ENCODE measurements at regions of chr1 and their contacts with region 1.

Region 1: DNA sequence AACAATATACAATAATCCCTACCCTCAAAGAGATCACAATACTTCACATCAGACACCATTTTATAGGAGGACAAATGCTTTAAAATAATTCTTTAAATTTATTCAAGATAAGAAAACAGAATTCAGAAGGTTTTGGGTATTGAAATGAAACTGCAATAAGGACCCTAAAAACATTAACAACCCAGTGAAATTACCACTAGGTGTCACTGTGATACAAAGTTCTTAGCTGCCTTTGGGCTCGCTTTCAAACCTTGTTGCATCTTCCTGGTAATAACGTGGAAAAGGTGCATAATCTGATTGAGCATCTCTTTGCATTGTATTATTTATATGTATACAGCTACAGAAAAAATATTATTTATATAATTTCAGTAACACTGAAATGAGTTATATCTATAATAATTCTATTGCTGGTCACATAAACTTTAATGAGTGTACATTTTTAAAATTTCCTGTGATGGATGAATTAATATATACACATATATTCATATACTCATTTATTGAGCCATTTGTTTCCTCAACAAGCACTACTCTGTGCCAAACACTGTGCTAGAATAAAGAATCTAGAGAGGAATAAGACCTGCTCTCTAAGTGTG is 185.2 kb downstream of the FAF1 start:
- DNase-seq: peak; percentile 6
- ATAC-seq: no peak
- H3K4me3 Mint-ChIP-seq: no peak overlapping the region
- H3K27ac Mint-ChIP-seq: no peak overlapping the region
- H3K4me1 Mint-ChIP-seq: peaks cover 3% of the 10 kb centered on the region
- H3K27me3 Mint-ChIP-seq: no peaks in the 10 kb centered on the region

Region 2: DNA sequence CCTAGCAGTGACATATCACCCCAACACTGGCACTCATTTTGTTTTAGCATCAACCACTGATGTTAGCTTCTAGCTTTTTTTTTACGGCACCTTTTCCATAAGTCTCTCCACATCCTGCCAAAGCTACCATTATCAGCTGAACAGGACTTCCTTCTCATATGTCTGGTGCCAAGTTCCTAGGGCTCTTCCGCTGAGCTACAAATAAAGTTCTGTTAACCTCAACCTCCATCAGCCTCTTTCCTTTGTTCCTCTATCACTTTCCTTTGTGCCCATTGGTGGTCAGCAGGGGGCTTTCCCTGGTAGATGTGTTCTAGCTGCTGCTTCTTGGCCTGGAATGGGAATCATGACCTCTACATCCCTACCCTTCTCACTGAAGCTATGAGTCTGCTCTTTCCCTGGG is 21.4 kb after region 1 on chr1:
- CTCF ChIA-PET with region 1: interaction called, 14 read pairs
- POLR2A ChIA-PET with region 1: no interaction called
- intact Hi-C with region 1: no loop called
- DNase-seq: no peak
- ATAC-seq: no peak
- H3K4me3 Mint-ChIP-seq: no peak overlapping the region
- H3K27ac Mint-ChIP-seq: no peak overlapping the region
- H3K4me1 Mint-ChIP-seq: no peaks in the 10 kb centered on the region
- H3K27me3 Mint-ChIP-seq: no peaks in the 10 kb centered on the region

Region 3: DNA sequence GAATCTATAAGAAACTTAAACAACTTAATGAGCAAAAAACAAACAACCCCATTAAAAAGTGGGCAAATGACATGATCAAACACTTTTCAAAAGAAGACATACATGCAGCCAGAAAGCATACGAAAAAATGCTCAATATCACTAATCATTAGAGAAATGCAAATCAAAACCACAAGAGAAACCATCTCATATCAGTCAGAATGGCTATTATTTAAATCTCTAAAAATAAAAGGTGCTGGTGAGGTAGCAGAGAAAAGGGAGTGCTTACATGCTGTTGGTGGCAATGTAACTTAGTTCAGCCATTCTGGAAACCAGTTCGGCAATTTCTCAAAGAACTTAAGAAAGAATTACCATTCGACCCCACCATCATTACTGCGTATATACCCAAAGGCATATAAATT is 37.5 kb after region 1 on chr1:
- CTCF ChIA-PET with region 1: no interaction called
- POLR2A ChIA-PET with region 1: no interaction called
- intact Hi-C with region 1: no loop called
- DNase-seq: no peak
- ATAC-seq: no peak
- H3K4me3 Mint-ChIP-seq: no peak overlapping the region
- H3K27ac Mint-ChIP-seq: no peak overlapping the region
- H3K4me1 Mint-ChIP-seq: peaks cover 17% of the 10 kb centered on the region
- H3K27me3 Mint-ChIP-seq: no peaks in the 10 kb centered on the region

Region 4: DNA sequence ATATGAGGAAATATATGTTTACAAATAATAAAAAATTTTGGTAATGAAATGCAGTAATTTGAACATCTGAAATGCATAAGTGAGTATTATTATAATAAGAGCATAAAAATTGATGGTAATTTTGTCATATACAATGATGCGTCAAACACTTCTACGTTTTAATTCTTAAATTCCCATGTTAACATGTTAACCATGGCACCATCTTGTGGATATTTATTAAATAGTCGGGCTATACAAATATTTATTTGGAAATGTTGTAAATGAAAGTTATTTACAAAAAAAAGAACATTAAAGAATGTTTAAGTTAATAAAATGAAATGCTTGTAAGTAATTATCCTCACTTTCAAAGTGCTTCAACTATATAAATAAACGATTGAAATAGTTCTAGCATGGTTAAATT is 270.0 kb after region 1 on chr1:
- CTCF ChIA-PET with region 1: no interaction called
- POLR2A ChIA-PET with region 1: no interaction called
- intact Hi-C with region 1: loop called in 1 of 2 experiments (anchors 5 kb)
- DNase-seq: no peak
- ATAC-seq: no peak
- H3K4me3 Mint-ChIP-seq: no peak overlapping the region
- H3K27ac Mint-ChIP-seq: no peak overlapping the region
- H3K4me1 Mint-ChIP-seq: no peaks in the 10 kb centered on the region
- H3K27me3 Mint-ChIP-seq: peaks cover 7% of the 10 kb centered on the region

Region 5: GRCh38 chr1:51058858-51059257 is 284.0 kb after region 1 on chr1:
- CTCF ChIA-PET with region 1: interaction called, 4 read pairs
- POLR2A ChIA-PET with region 1: no interaction called
- intact Hi-C with region 1: loop called (anchors 5 kb)
- DNase-seq: peak; percentile 7
- ATAC-seq: no peak
- H3K4me3 Mint-ChIP-seq: no peak overlapping the region
- H3K27ac Mint-ChIP-seq: no peak overlapping the region
- H3K4me1 Mint-ChIP-seq: no peaks in the 10 kb centered on the region
- H3K27me3 Mint-ChIP-seq: peaks cover 9% of the 10 kb centered on the region

Region 6: DNA sequence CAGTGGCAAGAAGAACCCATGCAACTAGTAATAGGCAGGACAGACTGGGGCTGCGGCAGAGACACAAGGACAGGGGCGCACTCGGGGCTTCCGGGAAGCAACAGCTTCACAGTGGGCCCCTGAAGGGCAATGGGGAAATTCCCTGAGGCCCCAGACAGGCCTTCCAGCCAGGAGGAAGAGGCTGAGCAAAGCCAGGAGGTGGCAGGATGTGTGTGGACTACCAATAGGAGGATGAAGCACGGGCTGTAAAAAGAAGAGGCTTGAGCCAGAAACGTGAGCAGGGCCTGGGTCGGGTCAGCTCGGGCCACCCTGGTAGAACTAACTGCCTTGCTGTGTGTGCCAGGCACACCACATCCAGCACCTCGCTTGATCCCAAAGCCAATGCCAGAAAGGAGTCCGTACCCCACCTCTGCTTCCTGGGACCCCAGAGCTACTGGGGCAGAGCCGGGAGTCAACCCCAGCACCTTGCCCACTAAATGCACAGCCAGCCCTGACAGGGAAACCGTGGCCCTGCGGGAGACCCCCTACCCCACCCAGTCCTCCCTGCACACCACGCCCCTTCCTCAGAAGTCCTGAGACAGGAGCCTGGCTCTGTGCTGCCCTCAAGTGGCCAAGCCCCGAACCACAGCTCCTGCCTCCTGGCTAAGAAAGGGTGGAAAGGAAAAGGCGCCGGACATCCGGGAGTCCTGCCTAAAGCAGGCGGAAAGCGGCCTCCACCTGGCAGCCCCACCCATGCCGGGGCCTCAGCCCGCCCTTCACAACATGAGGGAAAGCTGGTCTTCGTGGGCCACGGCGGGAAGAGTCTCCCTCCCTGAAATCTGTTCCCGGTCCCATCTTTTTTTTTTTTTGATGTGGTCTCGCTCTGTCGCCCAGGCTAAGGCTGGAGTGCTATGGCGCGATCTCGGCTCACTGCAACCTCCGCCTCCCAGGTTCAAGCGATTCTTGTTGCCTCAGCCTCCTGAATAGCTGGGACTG is 521.8 kb after region 1 on chr1:
- CTCF ChIA-PET with region 1: interaction called, 4 read pairs
- POLR2A ChIA-PET with region 1: no interaction called
- intact Hi-C with region 1: loop called in 1 of 2 experiments (anchors 10 kb)
- DNase-seq: peak; percentile 88
- ATAC-seq: peak; percentile 85
- H3K4me3 Mint-ChIP-seq: peak overlapping the region; percentile 61
- H3K27ac Mint-ChIP-seq: peak overlapping the region; percentile 33
- H3K4me1 Mint-ChIP-seq: peaks cover 11% of the 10 kb centered on the region
- H3K27me3 Mint-ChIP-seq: no peaks in the 10 kb centered on the region